Spleen (tissue), 13 donors: ENCODE measurements at regions of chr19 and their contacts with region 1.

Region 1: GRCh38 chr19:54168174-54168917 is 4.6 kb downstream of the TMC4 start:
- DNase-seq: peak; percentile 98
- H3K4me3 ChIP-seq: peak overlapping the region in 1 of 8 donors; percentile 34
- H3K27ac ChIP-seq: peak overlapping the region in 2 of 8 donors; percentile 21 to 54
- H3K4me1 ChIP-seq: peaks cover 2 to 40% (median 24%) of the 10 kb centered on the region in 6 donors
- H3K27me3 ChIP-seq: peaks cover 0 to 41% (median 10%) of the 10 kb centered on the region in 7 donors
- CTCF ChIP-seq: peak; percentile 80 to 98 (median 90)
- POLR2A ChIP-seq: no peak

Region 2: GRCh38 chr19:54231077-54231931 is 63.0 kb after region 1 on chr19:
- intact Hi-C with region 1: loop called (anchors 5 kb)
- DNase-seq: peak; percentile 96
- H3K4me3 ChIP-seq: no peak overlapping the region
- H3K27ac ChIP-seq: peak overlapping the region in 1 of 8 donors; percentile 47
- H3K4me1 ChIP-seq: peaks cover 0 to 14% (median 7%) of the 10 kb centered on the region in 6 donors
- H3K27me3 ChIP-seq: peaks cover 0 to 21% (median 0%) of the 10 kb centered on the region in 7 donors
- CTCF ChIP-seq: peak; percentile 89 to 98 (median 94)
- POLR2A ChIP-seq: no peak

Region 3: DNA sequence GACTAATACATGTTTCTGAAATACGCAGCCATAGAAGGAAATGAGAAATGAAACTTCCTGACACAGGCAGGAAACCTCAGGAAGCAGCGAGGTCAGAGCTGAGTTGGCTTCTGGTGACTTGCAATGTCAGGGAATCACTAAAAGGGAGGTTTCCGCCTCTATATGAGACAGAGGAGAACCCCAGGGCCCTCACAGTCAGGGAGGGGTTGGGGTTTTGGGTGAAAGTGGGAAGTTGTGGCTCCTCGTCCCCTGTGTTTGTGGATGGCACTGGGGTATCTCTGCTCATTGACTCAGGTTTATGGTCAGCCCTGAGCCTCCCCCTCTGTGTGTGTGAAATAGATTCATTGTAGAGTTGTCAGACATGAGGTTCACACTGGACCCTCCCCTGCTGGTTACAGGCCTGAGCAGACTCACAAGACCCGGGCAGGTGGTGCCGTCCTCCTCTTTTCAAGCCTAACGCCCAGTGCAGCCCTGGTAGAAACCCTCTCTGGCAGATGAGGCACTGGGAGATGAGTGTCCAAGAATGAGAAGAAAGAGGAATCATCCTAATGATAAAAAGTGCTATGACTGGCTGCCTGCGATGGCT is 79.8 kb after region 1 on chr19:
- intact Hi-C with region 1: no loop called
- DNase-seq: peak; percentile 87
- H3K4me3 ChIP-seq: peak overlapping the region in 1 of 8 donors; percentile 36
- H3K27ac ChIP-seq: peak overlapping the region; percentile 55 to 92 (median 88)
- H3K4me1 ChIP-seq: peaks cover 7 to 59% (median 36%) of the 10 kb centered on the region in 6 donors
- H3K27me3 ChIP-seq: peaks cover 0 to 19% (median 0%) of the 10 kb centered on the region in 7 donors
- CTCF ChIP-seq: no peak
- POLR2A ChIP-seq: no peak